Heart left ventricle (tissue), 16 donors: ENCODE measurements at regions of chr11 and their contacts with region 1.

Region 1: DNA sequence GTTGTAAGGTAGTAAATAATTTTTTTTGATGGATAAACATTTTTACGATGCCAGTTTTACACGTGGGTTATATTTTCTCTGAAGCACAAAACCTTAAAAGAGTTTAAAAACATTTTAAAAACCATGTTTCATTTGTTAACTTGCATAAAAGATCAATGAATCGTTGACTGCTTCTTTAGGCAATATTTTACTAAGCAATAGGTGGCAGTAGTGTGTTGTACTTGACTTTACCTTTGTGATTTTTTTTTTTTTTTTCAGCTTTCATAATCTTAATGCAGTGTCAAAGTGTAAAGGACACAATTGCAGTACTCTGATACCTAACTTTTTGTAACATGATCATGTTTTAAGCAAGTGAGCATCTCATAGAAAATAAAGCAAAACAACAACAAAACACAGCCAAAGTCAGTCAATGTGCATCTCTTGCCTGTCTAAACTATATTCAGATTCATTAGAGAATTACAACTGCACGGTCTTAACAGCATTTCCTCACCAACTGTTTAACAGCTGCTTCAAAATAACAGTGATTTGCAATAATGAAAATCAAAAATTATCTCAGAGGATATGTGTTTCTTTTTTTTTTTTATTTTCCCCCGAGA is 27.7 kb downstream of the DNAJC24 start:
- DNase-seq: no peak
- ATAC-seq: no peak
- H3K4me3 ChIP-seq: no peak overlapping the region
- H3K27ac ChIP-seq: no peak overlapping the region
- H3K4me1 ChIP-seq: no peaks in the 10 kb centered on the region
- H3K27me3 ChIP-seq: no peaks in the 10 kb centered on the region
- CTCF ChIP-seq: peak; percentile 36 to 69 (median 58)
- POLR2A ChIP-seq: no peak

Region 2: GRCh38 chr11:31337806-31338205 is 59.5 kb before region 1 on chr11:
- intact Hi-C with region 1: no loop called
- DNase-seq: no peak
- ATAC-seq: no peak
- H3K4me3 ChIP-seq: no peak overlapping the region
- H3K27ac ChIP-seq: no peak overlapping the region
- H3K4me1 ChIP-seq: no peaks in the 10 kb centered on the region
- H3K27me3 ChIP-seq: no peaks in the 10 kb centered on the region
- CTCF ChIP-seq: no peak
- POLR2A ChIP-seq: no peak

Region 3: DNA sequence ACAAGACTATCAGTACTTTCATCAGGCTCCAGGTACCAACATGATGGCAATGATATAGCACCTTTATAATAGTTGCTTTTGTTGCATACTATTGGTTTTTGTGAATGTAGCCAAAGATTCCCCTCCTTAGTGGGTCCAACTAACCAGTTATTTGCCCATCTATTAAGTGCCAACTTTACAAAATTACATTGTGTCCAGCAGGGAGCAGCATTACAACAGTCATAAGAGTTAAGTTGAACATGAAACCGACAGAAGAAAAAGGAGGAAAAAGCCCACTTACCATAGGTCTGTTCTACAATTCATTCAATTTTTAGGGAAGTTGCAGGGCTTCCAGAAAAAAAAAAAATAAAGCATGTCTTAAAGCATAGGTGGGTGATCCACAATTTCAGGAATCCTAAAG is 90.5 kb after region 1 on chr11:
- intact Hi-C with region 1: loop called in 1 of 10 experiments (anchors 10 kb)
- DNase-seq: no peak
- ATAC-seq: no peak
- H3K4me3 ChIP-seq: no peak overlapping the region
- H3K27ac ChIP-seq: no peak overlapping the region
- H3K4me1 ChIP-seq: peaks cover 0 to 12% (median 0%) of the 10 kb centered on the region in 12 donors
- H3K27me3 ChIP-seq: no peaks in the 10 kb centered on the region
- CTCF ChIP-seq: peak in 11 of 12 donors; percentile 12 to 46 (median 30)
- POLR2A ChIP-seq: no peak

Region 4: DNA sequence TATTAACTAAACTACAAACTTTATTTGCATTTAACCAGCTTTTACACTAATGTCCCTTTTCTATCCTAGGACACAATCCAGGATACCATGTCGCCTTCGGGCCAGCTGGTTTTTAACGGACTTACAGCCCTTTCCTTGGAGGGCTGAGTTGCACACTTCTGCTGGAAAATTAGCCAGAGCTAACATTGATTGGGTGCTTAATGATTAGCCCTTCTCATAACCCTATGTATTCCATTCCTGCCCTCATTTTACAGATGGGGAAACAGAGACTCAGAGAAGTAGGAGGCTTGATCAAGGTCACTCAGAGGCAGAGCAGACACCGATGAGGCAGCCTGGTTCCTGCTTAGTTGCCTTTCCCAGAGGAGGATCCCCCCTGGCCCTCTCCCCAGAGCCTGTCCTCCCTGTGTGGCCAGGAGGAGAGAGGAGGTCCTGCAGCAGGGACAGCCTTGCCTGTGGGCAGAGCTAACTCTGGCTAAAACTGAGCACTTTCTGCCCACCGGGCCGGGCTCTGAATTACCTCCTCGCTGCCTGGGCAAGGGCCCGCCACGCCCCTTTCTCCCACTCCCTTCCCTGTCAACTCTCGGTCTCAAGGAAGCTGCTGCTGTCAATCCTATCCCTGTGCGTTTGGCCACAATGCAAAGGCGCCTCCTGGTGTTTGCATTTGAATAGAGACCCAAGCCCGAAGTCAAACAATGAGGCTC is 473.4 kb after region 1 on chr11:
- intact Hi-C with region 1: loop called in 9 of 10 experiments (anchors 2 to 10 kb)
- DNase-seq: peak in 4 of 5 donors; percentile 13 to 39 (median 34)
- ATAC-seq: peak in 3 of 4 donors; percentile 45 to 67 (median 50)
- H3K4me3 ChIP-seq: no peak overlapping the region
- H3K27ac ChIP-seq: no peak overlapping the region
- H3K4me1 ChIP-seq: peaks cover 0 to 5% (median 0%) of the 10 kb centered on the region in 12 donors
- H3K27me3 ChIP-seq: peaks cover 0 to 55% (median 6%) of the 10 kb centered on the region in 9 donors
- CTCF ChIP-seq: peak; percentile 39 to 71 (median 62)
- POLR2A ChIP-seq: no peak

Region 5: DNA sequence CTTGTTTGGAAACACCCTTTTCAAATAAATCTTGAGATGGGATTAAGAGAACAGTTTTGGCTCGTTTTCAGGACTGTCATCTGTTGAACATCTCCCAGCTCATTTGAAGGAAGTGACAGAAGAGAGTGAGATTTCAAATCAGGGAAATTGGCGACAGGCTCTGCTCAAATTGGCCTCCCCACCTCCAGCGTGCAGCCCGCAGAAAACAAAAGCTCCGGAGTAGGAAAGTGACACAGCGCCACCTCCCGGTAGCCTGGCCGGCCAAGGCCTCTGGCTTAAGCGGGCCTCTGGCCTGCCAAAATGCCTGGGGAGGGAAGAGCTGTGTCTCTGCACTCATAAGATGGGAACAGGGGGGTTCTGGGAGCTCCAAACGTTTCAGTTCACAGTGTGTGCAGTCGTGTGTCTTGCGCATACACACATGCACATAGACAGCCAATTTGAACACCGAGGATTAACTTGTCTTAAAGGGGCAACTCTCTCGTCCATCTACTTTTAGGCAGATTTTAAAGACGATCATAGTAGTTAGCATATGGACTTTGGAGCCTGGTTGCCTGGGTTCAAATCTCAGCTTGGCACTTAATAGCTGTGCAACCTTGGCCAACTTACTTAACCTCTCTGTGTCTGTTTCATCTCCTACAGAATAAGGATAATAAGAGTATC is 560.9 kb after region 1 on chr11:
- intact Hi-C with region 1: loop called in 7 of 10 experiments (anchors 5 to 10 kb)
- DNase-seq: peak; percentile 60 to 82 (median 63)
- ATAC-seq: peak; percentile 74 to 92 (median 81)
- H3K4me3 ChIP-seq: no peak overlapping the region
- H3K27ac ChIP-seq: no peak overlapping the region
- H3K4me1 ChIP-seq: peaks cover 0 to 5% (median 0%) of the 10 kb centered on the region in 12 donors
- H3K27me3 ChIP-seq: no peaks in the 10 kb centered on the region
- CTCF ChIP-seq: peak; percentile 64 to 86 (median 78)
- POLR2A ChIP-seq: no peak

Region 6: DNA sequence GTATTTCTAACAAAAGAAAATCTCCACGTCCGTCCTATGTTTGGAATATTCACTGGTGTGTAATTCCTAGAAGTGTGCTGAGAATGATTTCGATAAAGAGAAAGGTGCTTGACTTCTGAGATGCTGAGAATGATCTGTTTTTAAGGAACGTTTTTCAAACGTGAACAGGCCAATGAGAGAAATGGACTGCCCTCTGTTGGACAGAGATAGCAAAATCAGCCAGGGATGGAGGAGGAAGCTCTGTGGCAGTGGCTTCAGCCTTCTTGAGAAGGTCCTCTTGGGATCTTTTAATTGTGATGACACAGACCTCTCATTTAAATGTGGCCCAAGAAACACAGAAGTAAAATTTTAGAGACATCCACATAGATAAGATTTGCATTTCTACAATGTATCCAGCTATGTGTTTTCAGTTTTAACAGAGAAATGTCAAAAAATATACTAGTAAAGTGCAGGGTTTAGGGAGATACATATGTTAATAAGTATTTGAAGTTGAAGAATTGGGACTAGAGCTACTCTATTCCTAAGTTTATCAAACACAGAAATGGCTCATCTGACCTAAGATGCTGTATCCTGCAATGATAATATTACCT is 609.6 kb after region 1 on chr11:
- intact Hi-C with region 1: loop called in 1 of 10 experiments (anchors 10 kb)
- DNase-seq: no peak
- ATAC-seq: peak in 1 of 4 donors; percentile 63
- H3K4me3 ChIP-seq: peak overlapping the region in 1 of 12 donors; percentile 26
- H3K27ac ChIP-seq: no peak overlapping the region
- H3K4me1 ChIP-seq: no peaks in the 10 kb centered on the region
- H3K27me3 ChIP-seq: peaks cover 0 to 84% (median 23%) of the 10 kb centered on the region in 9 donors
- CTCF ChIP-seq: peak; percentile 37 to 72 (median 56)
- POLR2A ChIP-seq: no peak

Region 7: DNA sequence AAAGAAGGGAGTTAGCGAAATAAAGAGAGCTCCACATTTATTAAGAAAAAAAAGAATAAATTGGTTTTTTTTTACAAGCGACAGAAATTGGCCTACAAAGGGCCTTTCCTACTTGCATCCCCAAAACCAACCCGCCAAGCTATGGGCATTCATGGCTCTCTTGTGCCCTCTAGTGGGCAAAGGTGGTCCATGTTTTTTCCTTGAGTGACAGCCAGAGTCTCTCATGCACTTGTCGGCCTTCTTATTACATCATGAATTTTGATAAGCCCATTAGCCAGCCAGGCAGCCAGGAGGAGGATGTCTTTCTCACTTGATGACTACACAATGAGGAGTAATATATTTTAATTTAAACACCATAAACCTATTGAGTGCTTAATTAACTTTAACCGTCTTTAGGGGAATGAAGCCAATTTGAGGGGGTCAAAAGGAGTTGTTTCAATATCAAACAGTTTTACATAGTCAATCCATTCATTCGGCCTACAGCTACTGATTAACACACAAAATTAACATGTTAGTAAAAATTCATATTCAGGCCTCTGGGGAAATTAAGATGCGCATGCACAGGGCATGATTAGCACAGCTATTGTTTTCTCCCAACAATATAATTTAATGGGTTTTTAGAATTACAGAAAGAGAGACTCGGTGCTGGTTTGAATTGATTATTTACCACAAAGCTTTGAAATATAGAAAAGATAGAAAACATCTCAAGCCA is 779.0 kb after region 1 on chr11:
- intact Hi-C with region 1: loop called in 4 of 10 experiments (anchors 5 to 10 kb)
- DNase-seq: peak in 4 of 5 donors; percentile 54 to 70 (median 66)
- ATAC-seq: peak in 3 of 4 donors; percentile 62 to 78 (median 74)
- H3K4me3 ChIP-seq: no peak overlapping the region
- H3K27ac ChIP-seq: no peak overlapping the region
- H3K4me1 ChIP-seq: peaks cover 0 to 9% (median 0%) of the 10 kb centered on the region in 12 donors
- H3K27me3 ChIP-seq: peaks cover 0 to 7% (median 0%) of the 10 kb centered on the region in 9 donors
- CTCF ChIP-seq: peak; percentile 82 to 96 (median 88)
- POLR2A ChIP-seq: no peak